HCT116 (cell line): ENCODE measurements at regions of chr17 and their contacts with region 1.

Region 1: GRCh38 chr17:9890124-9890523 is 14.9 kb downstream of the RCVRN start:
- DNase-seq: peak; percentile 43
- ATAC-seq: peak; percentile 99
- H3K4me3 ChIP-seq: no peak overlapping the region
- H3K27ac ChIP-seq: no peak overlapping the region
- H3K4me1 ChIP-seq: peaks cover 0 to 4% of the 10 kb centered on the region in 2 experiments; a peak in 2 of 4 replicates
- H3K27me3 ChIP-seq: 0 out of 2 replicates have a peak, but pooled peaks cover 4% of the 10 kb centered on the region
- CTCF ChIP-seq: peak; percentile 29 to 96 (median 92); a peak in 5 of 6 replicates
- POLR2A ChIP-seq: no peak
- RAD21 ChIP-seq: peak; percentile 58

Region 2: GRCh38 chr17:9729034-9729650 is 161.0 kb before region 1 on chr17:
- CTCF ChIA-PET with region 1: interaction called, 3 read pairs
- POLR2A ChIA-PET with region 1: no interaction called
- RAD21 ChIA-PET with region 1: no interaction called
- intact Hi-C with region 1: loop called (anchors 2 kb)
- DNase-seq: peak; percentile 23
- ATAC-seq: peak; percentile 58; the same call in 1 of the 2 replicates
- H3K4me3 ChIP-seq: no peak overlapping the region
- H3K27ac ChIP-seq: no peak overlapping the region
- H3K4me1 ChIP-seq: peaks cover 3 to 9% of the 10 kb centered on the region in 2 experiments; a peak in 2 of 4 replicates
- H3K27me3 ChIP-seq: no peaks in the 10 kb centered on the region
- CTCF ChIP-seq: peak; percentile 77 to 97 (median 95)
- POLR2A ChIP-seq: no peak
- RAD21 ChIP-seq: peak; percentile 85

Region 3: GRCh38 chr17:9905902-9906301 is 15.8 kb after region 1 on chr17:
- CTCF ChIA-PET with region 1: interaction called, 10 read pairs
- POLR2A ChIA-PET with region 1: no interaction called
- RAD21 ChIA-PET with region 1: no interaction called
- intact Hi-C with region 1: no loop called
- DNase-seq: peak; percentile 26
- ATAC-seq: peak; percentile 90
- H3K4me3 ChIP-seq: no peak overlapping the region
- H3K27ac ChIP-seq: no peak overlapping the region
- H3K4me1 ChIP-seq: no peaks in the 10 kb centered on the region
- H3K27me3 ChIP-seq: peaks cover 4% of the 10 kb centered on the region; the same call in 1 of the 2 replicates
- CTCF ChIP-seq: peak; percentile 12 to 84 (median 75); a peak in 4 of 6 replicates
- POLR2A ChIP-seq: no peak
- RAD21 ChIP-seq: peak; percentile 32; the same call in 1 of the 2 replicates